ENCODE measurements at regions of chr19 and their contacts with region 1.

Region 1: DNA sequence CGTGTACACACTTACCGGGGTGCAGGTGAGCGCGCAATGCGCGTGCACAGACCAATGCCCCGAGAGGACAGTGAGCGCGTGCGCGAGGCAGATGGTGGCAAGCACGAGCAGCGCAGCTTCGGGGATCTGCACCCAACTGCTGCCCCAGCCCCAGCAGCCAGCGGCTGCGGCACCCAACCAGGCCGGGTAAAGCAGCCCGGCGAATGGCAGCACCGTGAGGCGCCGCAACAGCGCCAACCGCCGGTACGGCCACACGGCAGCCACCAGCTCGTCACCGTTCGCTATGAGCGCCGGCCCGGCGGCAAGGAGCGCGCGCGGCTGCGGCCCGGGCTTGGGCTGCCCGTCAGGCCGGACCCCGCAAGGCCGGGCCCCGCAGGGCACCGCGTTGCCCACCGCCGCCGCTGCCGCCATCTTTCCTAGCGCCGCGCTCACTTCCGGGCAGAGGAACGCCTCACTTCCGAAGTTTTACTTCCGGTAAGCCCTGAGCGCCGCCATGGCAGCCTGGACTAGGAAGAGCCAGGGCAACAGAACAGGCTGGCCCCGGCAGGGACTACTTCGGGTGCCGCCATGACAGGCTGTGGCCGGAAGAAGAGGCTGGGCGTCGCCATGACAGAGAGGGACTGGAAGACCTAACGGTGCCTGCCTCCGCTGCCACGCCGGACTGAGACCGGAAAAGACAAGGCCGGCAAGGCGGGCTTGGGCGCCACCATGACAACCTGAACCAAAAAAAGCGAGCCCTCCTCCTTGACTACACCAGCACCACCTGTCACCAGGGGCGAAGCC is at the start of gene ATP13A1:
- DNase-seq: peak; percentile 76
- ATAC-seq: peak; percentile 94
- H3K4me3 ChIP-seq: peak within 1 kb of the TSS; percentile 74 to 81
- H3K27ac ChIP-seq: peak within 1 kb of the TSS; percentile 79
- H3K4me1 ChIP-seq: peaks cover 10% of the 10 kb centered on the region
- H3K27me3 ChIP-seq: no peaks in the 10 kb centered on the region
- CTCF ChIP-seq: no peak
- total RNA-seq, gene ATP13A1: 62.3 TPM

Region 2: GRCh38 chr19:19732579-19733501 is 69.4 kb after region 1 on chr19 and contains the start of gene ZNF14:
- CTCF ChIA-PET with region 1: no interaction called
- POLR2A ChIA-PET with region 1: no interaction called
- in situ Hi-C with region 1: no loop called
- intact Hi-C with region 1: loop called (anchors 10 kb)
- DNase-seq: peak; percentile 78
- ATAC-seq: peak; percentile 100
- H3K4me3 ChIP-seq: peak within 1 kb of the TSS; percentile 84 to 98
- H3K27ac ChIP-seq: peak within 1 kb of the TSS; percentile 86
- H3K4me1 ChIP-seq: no peaks in the 10 kb centered on the region
- H3K27me3 ChIP-seq: no peaks in the 10 kb centered on the region
- CTCF ChIP-seq: no peak
- total RNA-seq, gene ZNF14: 5.6 TPM

Region 3: DNA sequence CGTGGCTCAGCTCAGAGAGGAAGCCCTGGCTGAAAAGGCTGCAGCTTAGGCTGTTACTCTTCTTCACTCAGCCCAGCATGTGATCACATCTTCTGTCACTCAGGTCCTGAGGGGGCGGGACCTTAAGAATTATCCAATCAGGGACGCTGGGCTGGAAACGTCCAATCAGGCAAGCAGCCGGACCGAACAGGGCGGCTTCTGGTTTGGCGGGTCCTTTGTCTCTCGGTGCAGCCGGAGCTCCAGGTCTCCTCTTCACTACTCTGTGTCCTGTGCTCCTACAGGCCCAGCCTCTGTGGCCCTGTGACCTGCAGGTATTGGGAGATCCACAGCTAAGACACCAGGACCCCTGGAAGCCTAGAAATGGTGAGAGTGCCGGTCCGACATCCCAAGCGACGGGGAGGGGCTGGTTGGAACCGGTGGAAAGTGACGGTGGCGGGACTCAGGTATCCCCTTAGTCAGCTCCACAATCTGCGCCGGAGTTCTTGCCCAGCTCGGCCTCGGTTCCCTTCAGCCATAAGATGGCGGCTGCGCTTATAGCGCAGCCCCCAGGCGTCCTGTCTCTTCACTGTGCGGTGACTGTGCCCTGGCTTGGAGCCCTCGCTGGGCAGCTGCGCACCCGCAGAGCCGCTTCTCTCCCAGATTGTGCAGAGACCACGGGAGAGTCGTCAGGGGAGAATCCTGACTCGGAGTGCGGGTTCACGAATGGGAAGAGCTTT is 237.4 kb after region 1 on chr19 and contains the start of gene ZNF93:
- CTCF ChIA-PET with region 1: no interaction called
- POLR2A ChIA-PET with region 1: interaction called, 11 read pairs
- in situ Hi-C with region 1: no loop called
- intact Hi-C with region 1: no loop called
- DNase-seq: peak; percentile 64
- ATAC-seq: peak; percentile 97
- H3K4me3 ChIP-seq: peak within 1 kb of the TSS; percentile 77 to 92
- H3K27ac ChIP-seq: peak within 1 kb of the TSS; percentile 78
- H3K4me1 ChIP-seq: no peaks in the 10 kb centered on the region
- H3K27me3 ChIP-seq: no peaks in the 10 kb centered on the region
- CTCF ChIP-seq: no peak
- total RNA-seq, gene ZNF93: 8.9 TPM